BJ (cell line): ENCODE measurements at regions of chr15 and their contacts with region 1.

Region 1: GRCh38 chr15:73972984-73973682 is 19.0 kb downstream of the STOML1 start:
- DNase-seq: no peak
- H3K4me3 ChIP-seq: no peak overlapping the region
- H3K27me3 ChIP-seq: no peaks in the 10 kb centered on the region
- CTCF ChIP-seq: peak; percentile 94

Region 2: GRCh38 chr15:73950831-73951561 is 22.1 kb before region 1 on chr15:
- CTCF ChIA-PET with region 1: interaction called, 15 read pairs
- POLR2A ChIA-PET with region 1: no interaction called
- DNase-seq: peak; percentile 93
- H3K4me3 ChIP-seq: no peak overlapping the region
- H3K27me3 ChIP-seq: no peaks in the 10 kb centered on the region
- CTCF ChIP-seq: peak; percentile 91

Region 3: DNA sequence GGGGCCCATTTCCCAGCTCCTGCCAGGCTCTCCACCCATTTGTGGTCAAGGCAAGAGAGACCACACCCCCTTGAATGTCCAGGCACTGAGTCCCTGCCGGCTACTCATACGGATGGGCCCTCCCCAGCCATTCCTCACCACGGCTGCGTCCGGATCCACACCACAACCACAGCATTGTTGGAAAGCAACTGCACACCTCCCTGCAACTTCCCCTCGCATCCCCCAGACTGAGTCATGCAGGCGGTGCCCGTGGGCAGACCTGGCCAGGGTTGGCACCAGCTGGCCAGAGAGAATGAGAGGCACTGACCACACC is 16.4 kb before region 1 on chr15:
- CTCF ChIA-PET with region 1: interaction called, 28 read pairs
- POLR2A ChIA-PET with region 1: no interaction called
- DNase-seq: peak; percentile 85
- H3K4me3 ChIP-seq: no peak overlapping the region
- H3K27me3 ChIP-seq: no peaks in the 10 kb centered on the region
- CTCF ChIP-seq: no peak

Region 4: GRCh38 chr15:74036271-74037170 is 63.4 kb after region 1 on chr15:
- CTCF ChIA-PET with region 1: interaction called, 119 read pairs
- POLR2A ChIA-PET with region 1: no interaction called
- DNase-seq: no peak
- H3K4me3 ChIP-seq: no peak overlapping the region
- H3K27me3 ChIP-seq: no peaks in the 10 kb centered on the region
- CTCF ChIP-seq: peak; percentile 75

Region 5: GRCh38 chr15:74053941-74054529 is 80.9 kb after region 1 on chr15:
- CTCF ChIA-PET with region 1: interaction called, 121 read pairs
- POLR2A ChIA-PET with region 1: no interaction called
- DNase-seq: peak; percentile 51
- H3K4me3 ChIP-seq: no peak overlapping the region
- H3K27me3 ChIP-seq: no peaks in the 10 kb centered on the region
- CTCF ChIP-seq: peak; percentile 76

Region 6: GRCh38 chr15:74322181-74323076 is 349.3 kb after region 1 on chr15:
- CTCF ChIA-PET with region 1: interaction called, 67 read pairs
- POLR2A ChIA-PET with region 1: no interaction called
- DNase-seq: no peak
- H3K4me3 ChIP-seq: no peak overlapping the region
- H3K27me3 ChIP-seq: no peaks in the 10 kb centered on the region
- CTCF ChIP-seq: peak; percentile 93

Region 7: GRCh38 chr15:74709011-74709410 is 735.9 kb after region 1 on chr15:
- CTCF ChIA-PET with region 1: no interaction called
- POLR2A ChIA-PET with region 1: no interaction called
- DNase-seq: no peak
- H3K4me3 ChIP-seq: no peak overlapping the region
- H3K27me3 ChIP-seq: peaks cover 12% of the 10 kb centered on the region
- CTCF ChIP-seq: no peak